ENCODE measurements at regions of chr15 and their contacts with region 1.

Region 1: DNA sequence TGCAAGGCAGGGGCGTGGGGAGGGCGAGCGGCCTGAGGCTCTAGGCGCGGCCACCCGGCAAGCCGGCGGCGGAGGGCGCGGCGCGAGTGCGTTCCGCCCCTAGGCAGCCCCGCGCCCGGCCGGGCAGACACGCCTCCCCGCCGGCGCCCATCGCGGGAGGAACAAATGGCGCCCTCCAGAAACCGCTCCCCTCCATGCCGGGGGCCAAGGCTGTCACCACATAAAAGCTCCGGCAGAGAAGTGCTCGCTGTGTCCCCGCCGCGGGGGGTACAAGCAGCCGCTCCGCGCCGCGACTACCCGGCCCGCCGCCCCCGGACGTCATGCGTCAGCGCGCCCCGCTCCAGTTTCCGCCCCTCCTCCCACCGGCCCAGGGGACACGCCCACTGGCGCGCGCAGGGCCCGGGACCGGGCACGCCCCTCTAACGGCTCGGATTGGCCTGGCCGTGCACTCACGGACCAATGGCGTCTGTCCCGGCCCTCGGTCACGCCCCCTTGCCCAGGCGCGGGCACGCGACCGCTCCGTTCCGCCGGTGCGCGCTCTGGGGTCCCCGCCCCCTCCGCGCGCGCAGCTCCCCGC is 391 bp upstream of the KLF13 start:
- DNase-seq: peak; percentile 96 to 100 (median 99)
- ATAC-seq: peak; percentile 70 to 79 (median 74)
- H3K4me3 ChIP-seq: peak overlapping the region; percentile 63 to 80
- H3K4me3 Mint-ChIP-seq: peak overlapping the region; percentile 62 to 90 (median 85)
- H3K27ac ChIP-seq: peak overlapping the region; percentile 90
- H3K27ac Mint-ChIP-seq: peak overlapping the region; percentile 71
- H3K4me1 ChIP-seq: peaks cover 31 to 38% of the 10 kb centered on the region in 2 experiments
- H3K4me1 Mint-ChIP-seq: peaks cover 51 to 67% (median 59%) of the 10 kb centered on the region in 3 donors
- H3K27me3 ChIP-seq: no peaks in the 10 kb centered on the region
- H3K27me3 Mint-ChIP-seq: no peaks in the 10 kb centered on the region

Region 2: GRCh38 chr15:31263751-31264558 is 62.3 kb before region 1 on chr15:
- CTCF ChIA-PET with region 1: interaction called in 1 of 2 experiments, 3 read pairs
- POLR2A ChIA-PET with region 1: interaction called in 1 of 2 experiments, 10 read pairs
- DNase-seq: peak; percentile 42 to 87 (median 67)
- ATAC-seq: peak; percentile 56 to 71 (median 67)
- H3K4me3 ChIP-seq: no peak overlapping the region
- H3K4me3 Mint-ChIP-seq: peak overlapping the region; percentile 59 to 75 (median 63)
- H3K27ac ChIP-seq: peak overlapping the region; percentile 80
- H3K27ac Mint-ChIP-seq: peak overlapping the region; percentile 96 to 97
- H3K4me1 ChIP-seq: peaks cover 64 to 80% of the 10 kb centered on the region in 2 experiments
- H3K4me1 Mint-ChIP-seq: peaks cover 80 to 95% (median 85%) of the 10 kb centered on the region in 3 donors
- H3K27me3 ChIP-seq: no peaks in the 10 kb centered on the region
- H3K27me3 Mint-ChIP-seq: no peaks in the 10 kb centered on the region

Region 3: DNA sequence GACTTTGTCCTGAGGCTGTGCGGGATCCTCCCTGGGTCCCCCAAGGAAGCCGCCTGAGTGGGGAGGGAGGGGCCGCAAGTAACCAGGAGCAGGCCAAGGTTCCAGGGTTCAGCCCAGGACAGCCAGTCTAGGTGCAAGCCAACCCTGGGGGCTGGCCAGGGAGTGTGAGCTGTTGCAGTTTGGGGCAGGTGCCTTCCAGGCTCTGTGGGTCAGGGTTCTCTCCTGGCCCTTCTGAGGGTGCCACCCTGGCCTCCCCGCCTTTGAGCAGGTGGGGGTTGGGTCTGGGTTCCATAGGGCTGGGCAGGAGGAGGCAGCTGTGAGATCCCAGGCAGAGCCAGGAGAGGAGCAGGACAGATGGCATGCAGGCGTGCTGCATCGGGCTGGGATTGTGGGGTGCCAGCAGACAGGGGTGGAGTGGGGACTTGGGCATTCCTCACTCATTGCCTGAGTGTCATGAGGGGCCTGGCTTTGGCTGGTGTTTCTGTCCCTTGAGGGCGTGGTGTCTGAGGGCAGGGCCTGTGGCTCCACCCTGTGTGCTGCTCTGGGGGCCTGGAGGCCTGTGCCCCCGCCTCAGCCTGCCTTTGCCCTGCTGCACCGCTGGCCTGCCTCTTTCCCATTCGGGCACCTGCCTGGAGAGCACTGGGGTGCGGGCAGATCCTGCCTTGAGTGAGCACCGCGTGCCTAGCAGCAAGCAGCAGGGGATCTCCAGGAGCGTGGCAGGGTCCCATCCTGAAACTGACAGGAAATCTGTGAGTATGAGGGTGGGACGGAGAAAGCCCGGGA is 18.8 kb after region 1 on chr15:
- CTCF ChIA-PET with region 1: interaction called, 3 to 12 read pairs
- POLR2A ChIA-PET with region 1: interaction called, 7 read pairs
- DNase-seq: peak in 1 of 35 experiments; percentile 55
- ATAC-seq: peak in 1 of 4 experiments; percentile 6
- H3K4me3 ChIP-seq: peak overlapping the region; percentile 33 to 43
- H3K4me3 Mint-ChIP-seq: peak overlapping the region; percentile 81 to 94 (median 86)
- H3K27ac ChIP-seq: peak overlapping the region; percentile 99
- H3K27ac Mint-ChIP-seq: peak overlapping the region; percentile 96 to 98
- H3K4me1 ChIP-seq: peaks cover 93 to 100% of the 10 kb centered on the region in 2 experiments
- H3K4me1 Mint-ChIP-seq: peaks cover 98 to 100% (median 100%) of the 10 kb centered on the region in 3 donors
- H3K27me3 ChIP-seq: no peaks in the 10 kb centered on the region
- H3K27me3 Mint-ChIP-seq: no peaks in the 10 kb centered on the region

Region 4: DNA sequence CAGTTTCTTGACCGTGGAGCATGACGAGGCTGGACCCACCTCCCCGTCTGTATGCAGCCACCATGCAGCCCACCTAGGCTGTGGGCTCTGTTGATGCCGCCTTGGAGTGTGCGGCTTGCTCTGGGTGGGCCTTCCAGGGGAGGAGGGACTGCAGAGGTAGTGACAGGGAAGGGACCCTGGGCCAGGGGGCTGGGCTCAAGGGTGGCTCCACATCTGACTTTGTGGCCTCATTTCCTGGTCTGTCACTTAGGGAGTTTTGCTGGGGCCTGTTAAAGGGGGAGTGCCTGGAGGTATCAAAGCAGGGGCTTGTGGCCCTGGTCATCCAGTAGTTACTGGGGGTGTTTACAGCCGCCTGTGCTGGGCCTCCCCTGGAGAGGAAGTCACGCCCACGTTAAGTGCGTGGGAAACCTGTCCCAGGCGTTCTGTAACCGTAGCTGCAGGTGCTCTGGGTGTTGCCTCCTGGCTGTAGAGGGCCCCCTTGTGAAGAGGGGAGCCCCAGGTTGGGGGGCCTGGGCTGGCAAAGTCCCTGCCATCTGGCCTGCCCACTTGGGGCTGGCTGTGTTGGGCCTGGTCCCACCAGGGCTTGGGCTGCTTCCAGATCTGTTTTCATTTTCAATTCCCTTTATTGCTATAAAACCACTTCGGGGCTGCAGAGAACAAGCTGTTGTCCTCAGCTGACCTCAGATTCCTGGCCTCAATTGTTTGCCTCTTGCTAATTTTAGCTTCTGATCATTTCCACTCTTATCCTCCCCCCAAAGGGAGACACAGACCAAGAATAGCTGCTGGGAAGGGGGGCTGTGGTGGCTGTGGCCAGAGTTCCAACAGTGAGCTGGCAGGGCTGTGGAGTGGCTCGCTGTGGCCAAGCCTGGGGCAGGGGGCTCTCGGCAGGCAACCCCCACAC is 26.9 kb after region 1 on chr15:
- CTCF ChIA-PET with region 1: interaction called in 1 of 2 experiments, 5 read pairs
- POLR2A ChIA-PET with region 1: interaction called, 4 to 17 read pairs
- DNase-seq: peak in 31 of 35 experiments; percentile 31 to 76 (median 51)
- ATAC-seq: peak; percentile 50 to 69 (median 58)
- H3K4me3 ChIP-seq: peak overlapping the region; percentile 18 to 61
- H3K4me3 Mint-ChIP-seq: peak overlapping the region; percentile 62 to 94 (median 76)
- H3K27ac ChIP-seq: peak overlapping the region; percentile 99
- H3K27ac Mint-ChIP-seq: peak overlapping the region; percentile 96 to 98
- H3K4me1 ChIP-seq: peaks cover 89 to 100% of the 10 kb centered on the region in 2 experiments
- H3K4me1 Mint-ChIP-seq: peaks cover 96 to 100% (median 100%) of the 10 kb centered on the region in 3 donors
- H3K27me3 ChIP-seq: no peaks in the 10 kb centered on the region
- H3K27me3 Mint-ChIP-seq: no peaks in the 10 kb centered on the region

Region 5: DNA sequence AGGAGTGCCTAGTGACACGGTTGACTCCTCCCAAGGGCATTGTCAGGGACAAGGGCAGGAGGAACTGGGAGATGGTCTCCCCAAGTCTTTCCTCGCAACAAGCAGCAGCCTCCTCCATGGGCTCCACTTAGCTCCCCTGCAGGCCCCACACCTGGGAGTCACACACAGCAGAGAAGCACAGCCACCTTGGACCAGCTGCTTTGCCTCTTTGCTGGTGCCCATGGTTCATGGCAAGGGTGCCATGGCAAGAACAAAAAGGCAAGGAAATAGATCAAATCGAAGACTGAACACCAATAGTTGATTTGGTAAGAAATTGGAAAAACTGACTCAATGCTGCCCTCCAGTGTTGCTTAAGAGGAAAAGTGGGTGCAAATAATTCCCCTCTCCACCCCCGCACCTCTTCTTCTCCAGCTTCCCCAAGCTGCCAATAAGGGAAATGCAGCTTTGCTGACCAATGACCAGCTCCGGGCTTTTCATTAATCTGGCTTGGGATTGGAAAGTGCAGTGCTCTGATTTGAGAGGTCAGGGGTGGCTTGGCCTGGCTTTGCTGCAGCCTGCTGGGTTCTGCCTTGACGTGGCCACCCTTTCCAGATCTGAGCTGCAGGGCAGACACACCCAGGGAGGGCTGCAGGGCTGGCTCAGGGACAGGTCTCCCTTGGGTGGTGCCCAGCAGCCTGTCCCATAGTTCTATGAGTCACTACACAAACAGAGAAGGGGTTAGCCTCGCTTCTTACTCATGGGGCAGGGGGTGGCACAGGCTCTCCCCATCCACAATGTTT is 162.4 kb after region 1 on chr15:
- CTCF ChIA-PET with region 1: interaction called, 3 read pairs
- POLR2A ChIA-PET with region 1: interaction called in 1 of 2 experiments, 11 read pairs
- DNase-seq: peak in 20 of 35 experiments; percentile 19 to 89 (median 30)
- ATAC-seq: peak; percentile 31 to 59 (median 35)
- H3K4me3 ChIP-seq: no peak overlapping the region
- H3K4me3 Mint-ChIP-seq: no peak overlapping the region
- H3K27ac ChIP-seq: no peak overlapping the region
- H3K27ac Mint-ChIP-seq: peak overlapping the region; percentile 28 to 32
- H3K4me1 ChIP-seq: peaks cover 7 to 35% of the 10 kb centered on the region in 2 experiments
- H3K4me1 Mint-ChIP-seq: peaks cover 23 to 47% (median 37%) of the 10 kb centered on the region in 3 donors
- H3K27me3 ChIP-seq: peaks cover 0 to 6% of the 10 kb centered on the region in 2 experiments
- H3K27me3 Mint-ChIP-seq: peaks cover 0 to 5% of the 10 kb centered on the region in 2 donors

Measured in T-cell (primary cell).